Dendritic cell treated with granulocyte-macrophage colony-stimulating factor and Interleukin-4, amounts not matched to agents 40 ng/mL and 50 ng/mL, for 4 days (primary cell): ENCODE measurements at regions of chr7 and their contacts with region 1.

Region 1: DNA sequence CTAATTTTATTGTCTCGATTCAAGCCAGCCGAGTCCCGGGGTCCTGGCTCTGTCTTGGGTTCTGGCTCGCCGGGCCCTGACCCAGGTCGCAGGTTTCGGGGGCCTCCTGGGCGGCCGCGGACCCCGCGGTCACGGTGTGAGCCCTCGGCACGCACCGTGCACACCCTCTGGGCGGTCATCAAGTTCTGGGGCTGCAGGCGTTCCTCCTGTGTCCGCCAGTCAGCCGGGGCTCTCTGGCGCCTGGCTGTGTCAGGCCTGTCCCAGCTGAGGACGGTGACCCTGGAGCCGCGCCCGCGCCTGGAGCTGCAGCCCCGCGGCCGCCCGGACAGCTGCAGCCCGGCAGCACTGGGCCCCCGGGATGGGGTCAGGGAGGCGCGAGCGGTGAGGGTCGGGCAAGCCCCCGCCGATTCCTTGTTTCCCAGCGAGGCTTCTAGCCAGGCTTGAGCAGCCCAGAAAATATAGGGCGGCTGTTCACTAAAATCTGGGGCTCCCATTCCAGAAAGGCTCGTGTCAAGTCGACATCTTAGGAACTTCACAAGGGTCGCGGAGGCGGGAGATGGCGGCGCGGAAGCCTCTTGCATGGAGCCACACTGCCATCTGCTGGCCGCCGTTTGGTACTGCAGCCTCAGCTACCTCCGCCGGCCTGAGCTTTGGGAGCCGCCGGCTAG is 4.2 kb upstream of the HOXA7 start:
- H3K4me3 Mint-ChIP-seq: peak overlapping the region; percentile 92
- H3K27ac Mint-ChIP-seq: peak overlapping the region; percentile 80
- H3K4me1 Mint-ChIP-seq: peaks cover 60% of the 10 kb centered on the region
- H3K27me3 Mint-ChIP-seq: peaks cover 87% of the 10 kb centered on the region

Region 2: DNA sequence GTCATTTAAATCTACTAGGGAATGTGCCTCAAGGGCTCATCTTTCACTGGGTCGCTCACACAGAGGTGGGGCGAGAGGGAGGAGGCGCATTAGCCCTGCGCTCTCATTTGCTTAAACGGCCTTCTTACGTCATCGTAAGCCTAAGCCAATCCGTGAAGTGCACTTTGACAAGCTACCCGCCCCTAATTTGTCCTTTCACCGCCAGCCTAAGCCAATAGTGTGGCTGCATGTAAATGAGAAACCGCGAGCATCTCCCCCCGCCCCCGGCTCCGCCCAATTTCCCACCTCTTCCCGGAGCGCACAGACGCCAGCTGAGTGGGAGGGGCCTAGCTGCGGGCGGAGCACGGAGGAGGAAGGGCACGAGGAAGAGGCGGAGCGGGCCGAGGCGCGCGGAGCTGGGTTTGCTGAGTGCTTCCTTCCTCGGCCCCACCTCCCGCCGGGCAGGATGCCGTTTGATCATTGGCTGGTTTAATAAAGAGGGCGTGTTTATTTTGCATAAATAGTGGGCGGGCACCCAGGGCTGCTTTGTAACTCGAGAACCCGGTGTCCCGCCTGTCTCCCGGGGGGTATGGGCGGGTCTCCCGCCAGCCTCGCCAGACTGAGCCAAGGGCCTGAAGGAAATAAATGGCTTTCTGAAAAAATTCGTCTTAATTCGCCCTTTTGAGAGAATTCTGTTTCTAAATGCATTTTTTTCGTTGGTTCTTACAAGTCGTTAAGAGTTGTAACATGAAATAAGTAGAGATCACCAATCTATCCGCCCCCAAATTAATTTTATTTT is 1298.2 kb before region 1 on chr7:
- intact Hi-C with region 1: loop called (anchors 5 kb)
- H3K4me3 Mint-ChIP-seq: peak overlapping the region; percentile 61
- H3K27ac Mint-ChIP-seq: no peak overlapping the region
- H3K4me1 Mint-ChIP-seq: peaks cover 33% of the 10 kb centered on the region
- H3K27me3 Mint-ChIP-seq: peaks cover 16% of the 10 kb centered on the region

Region 3: DNA sequence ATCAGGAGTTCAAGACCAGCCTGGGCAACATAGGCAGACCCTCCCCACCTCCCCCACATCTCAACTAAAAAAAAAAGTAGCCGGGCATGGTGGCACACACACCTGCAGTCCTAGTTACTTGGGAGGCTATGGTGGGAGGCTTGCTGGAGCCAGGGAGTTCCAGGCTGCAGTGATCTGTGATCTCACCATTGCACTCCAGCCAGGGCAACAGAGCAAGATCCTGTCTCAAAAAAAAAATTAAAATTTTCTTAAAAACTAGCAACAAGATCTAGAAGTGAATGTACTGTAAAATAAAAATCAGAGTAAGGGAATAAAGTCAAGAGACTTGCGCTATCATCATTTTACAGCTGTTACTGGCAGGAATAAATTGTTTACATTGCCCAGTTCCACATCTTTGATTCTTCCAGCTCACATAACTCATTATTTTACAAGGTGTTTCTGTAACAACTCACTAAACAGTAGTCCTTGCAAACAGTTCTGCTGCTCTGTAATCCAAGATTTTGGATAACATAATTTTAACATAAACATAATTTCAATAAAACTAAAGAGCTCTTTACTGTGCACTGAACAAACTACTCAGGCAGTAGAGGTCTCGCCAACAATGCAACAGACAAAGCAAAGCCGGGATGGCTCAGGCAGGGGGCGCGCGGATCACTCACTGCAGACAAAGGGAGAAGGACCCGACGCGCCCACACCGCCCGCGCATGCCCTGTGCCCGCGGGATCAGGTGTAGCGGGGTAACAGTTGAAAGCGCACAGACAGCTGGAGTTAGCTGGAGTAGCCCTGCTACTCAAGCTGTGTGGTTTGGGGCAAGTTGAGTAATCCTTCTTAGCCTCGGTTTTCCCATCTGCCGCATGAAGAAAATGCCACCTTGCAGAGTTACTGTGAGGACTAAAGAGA is 1082.0 kb before region 1 on chr7:
- intact Hi-C with region 1: loop called (anchors 10 kb)
- H3K4me3 Mint-ChIP-seq: peak overlapping the region; percentile 7
- H3K27ac Mint-ChIP-seq: no peak overlapping the region
- H3K4me1 Mint-ChIP-seq: no peaks in the 10 kb centered on the region
- H3K27me3 Mint-ChIP-seq: peaks cover 59% of the 10 kb centered on the region

Region 4: GRCh38 chr7:26500749-26501352 is 659.8 kb before region 1 on chr7:
- intact Hi-C with region 1: loop called (anchors 5 kb)
- H3K4me3 Mint-ChIP-seq: no peak overlapping the region
- H3K27ac Mint-ChIP-seq: no peak overlapping the region
- H3K4me1 Mint-ChIP-seq: no peaks in the 10 kb centered on the region
- H3K27me3 Mint-ChIP-seq: peaks cover 8% of the 10 kb centered on the region

Region 5: GRCh38 chr7:26686448-26686981 is 474.2 kb before region 1 on chr7:
- intact Hi-C with region 1: loop called (anchors 2 kb)
- H3K4me3 Mint-ChIP-seq: peak overlapping the region; percentile 30
- H3K27ac Mint-ChIP-seq: peak overlapping the region; percentile 76
- H3K4me1 Mint-ChIP-seq: peaks cover 28% of the 10 kb centered on the region
- H3K27me3 Mint-ChIP-seq: no peaks in the 10 kb centered on the region

Region 6: GRCh38 chr7:26853788-26854393 is 306.8 kb before region 1 on chr7:
- intact Hi-C with region 1: loop called (anchors 5 kb)
- H3K4me3 Mint-ChIP-seq: no peak overlapping the region
- H3K27ac Mint-ChIP-seq: no peak overlapping the region
- H3K4me1 Mint-ChIP-seq: peaks cover 17% of the 10 kb centered on the region
- H3K27me3 Mint-ChIP-seq: peaks cover 8% of the 10 kb centered on the region

Region 7: GRCh38 chr7:26880852-26881251 is 279.8 kb before region 1 on chr7:
- intact Hi-C with region 1: no loop called
- H3K4me3 Mint-ChIP-seq: no peak overlapping the region
- H3K27ac Mint-ChIP-seq: no peak overlapping the region
- H3K4me1 Mint-ChIP-seq: no peaks in the 10 kb centered on the region
- H3K27me3 Mint-ChIP-seq: no peaks in the 10 kb centered on the region